ENCODE measurements at regions of chr11 and their contacts with region 1.

Region 1: DNA sequence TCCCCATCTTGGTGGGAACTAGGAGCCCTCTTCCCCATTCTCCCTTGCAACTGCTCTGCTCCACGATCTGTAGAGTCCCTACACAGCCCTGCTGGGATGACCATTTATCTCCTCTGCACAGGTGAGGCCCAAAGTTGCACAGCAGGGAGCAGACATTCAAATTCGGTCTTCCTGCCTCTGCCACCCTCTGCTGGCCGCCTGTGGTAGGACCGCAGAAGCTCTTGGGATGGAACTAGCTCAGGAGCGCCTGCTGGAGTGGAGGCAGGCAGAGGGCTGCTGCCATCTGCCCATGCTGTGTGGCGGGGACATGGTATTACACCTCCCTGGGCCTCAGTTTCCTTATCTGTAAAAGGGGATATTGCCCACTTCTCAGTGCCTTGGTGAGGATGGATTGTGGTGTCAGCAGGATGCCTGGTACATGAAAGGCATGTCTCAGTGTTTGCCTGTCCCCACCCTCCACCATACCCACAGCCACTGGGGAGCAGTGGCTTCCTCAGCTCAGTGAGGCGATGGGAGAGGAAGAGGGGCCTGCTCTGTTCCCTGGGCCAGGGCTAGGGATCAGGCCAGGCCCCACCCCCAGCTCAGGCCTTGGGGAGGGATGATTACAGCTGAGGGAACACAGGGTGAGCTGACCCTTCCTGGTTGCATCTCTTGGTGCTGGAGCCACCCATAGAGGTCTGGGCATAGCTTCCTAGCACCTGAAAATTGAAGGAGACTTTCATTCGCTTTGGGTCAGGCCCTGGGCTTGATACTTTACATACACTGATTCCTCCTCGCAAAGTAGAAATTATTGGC is 11.3 kb upstream of the OMP start:
- DNase-seq: peak; percentile 88
- ATAC-seq: peak; percentile 93
- H3K4me3 Mint-ChIP-seq: no peak overlapping the region
- H3K27ac Mint-ChIP-seq: no peak overlapping the region
- H3K4me1 Mint-ChIP-seq: peaks cover 7% of the 10 kb centered on the region
- H3K27me3 Mint-ChIP-seq: no peaks in the 10 kb centered on the region

Region 2: DNA sequence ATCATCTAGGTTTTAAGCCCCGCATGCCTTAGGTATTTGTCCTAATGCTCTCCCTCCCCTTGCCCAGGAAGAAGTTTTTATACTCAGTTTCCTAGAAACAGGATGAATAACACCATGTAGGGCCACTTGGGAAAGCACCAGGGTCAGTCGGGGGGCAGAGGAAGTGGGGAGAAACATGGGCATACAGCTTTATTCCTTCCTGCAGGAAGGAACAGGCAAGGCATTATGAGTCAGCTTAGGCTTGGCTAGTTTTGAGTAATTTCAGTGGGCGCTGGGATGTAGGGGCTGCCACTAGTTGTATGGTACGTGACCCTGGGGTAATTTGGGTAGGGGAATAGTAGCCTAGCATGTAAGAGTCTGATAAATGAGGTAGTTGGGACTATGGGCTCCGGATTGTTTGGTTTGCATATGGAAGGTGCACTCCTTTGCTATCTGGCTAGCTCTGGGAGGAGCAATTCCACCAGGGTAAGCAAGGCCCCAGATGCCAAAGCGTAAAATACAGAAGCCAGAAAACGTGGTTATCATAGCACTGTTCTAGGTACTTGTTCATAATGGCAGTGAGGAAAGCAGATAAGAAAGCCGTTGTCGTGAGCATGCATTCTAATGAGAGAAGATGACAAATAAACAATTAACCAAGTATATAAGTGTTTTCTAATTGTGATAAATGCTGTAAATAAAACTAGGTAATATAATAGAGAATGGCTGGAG is 205.8 kb before region 1 on chr11:
- CTCF ChIA-PET with region 1: no interaction called
- POLR2A ChIA-PET with region 1: no interaction called
- DNase-seq: no peak
- ATAC-seq: no peak
- H3K4me3 Mint-ChIP-seq: no peak overlapping the region
- H3K27ac Mint-ChIP-seq: no peak overlapping the region
- H3K4me1 Mint-ChIP-seq: peaks cover 9% of the 10 kb centered on the region
- H3K27me3 Mint-ChIP-seq: no peaks in the 10 kb centered on the region

Region 3: GRCh38 chr11:77039491-77040400 is 51.6 kb before region 1 on chr11:
- CTCF ChIA-PET with region 1: interaction called, 34 read pairs
- POLR2A ChIA-PET with region 1: interaction called, 3 read pairs
- DNase-seq: peak; percentile 44
- ATAC-seq: peak; percentile 80
- H3K4me3 Mint-ChIP-seq: no peak overlapping the region
- H3K27ac Mint-ChIP-seq: no peak overlapping the region
- H3K4me1 Mint-ChIP-seq: peaks cover 9% of the 10 kb centered on the region
- H3K27me3 Mint-ChIP-seq: peaks cover 44% of the 10 kb centered on the region

Region 4: GRCh38 chr11:77047007-77047927 is 44.1 kb before region 1 on chr11:
- CTCF ChIA-PET with region 1: interaction called, 77 read pairs
- POLR2A ChIA-PET with region 1: no interaction called
- DNase-seq: peak; percentile 91
- ATAC-seq: peak; percentile 89
- H3K4me3 Mint-ChIP-seq: peak overlapping the region; percentile 37
- H3K27ac Mint-ChIP-seq: peak overlapping the region; percentile 1
- H3K4me1 Mint-ChIP-seq: peaks cover 15% of the 10 kb centered on the region
- H3K27me3 Mint-ChIP-seq: peaks cover 21% of the 10 kb centered on the region

Region 5: GRCh38 chr11:77053217-77054015 is 37.9 kb before region 1 on chr11:
- CTCF ChIA-PET with region 1: interaction called, 77 read pairs
- POLR2A ChIA-PET with region 1: no interaction called
- DNase-seq: no peak
- ATAC-seq: no peak
- H3K4me3 Mint-ChIP-seq: no peak overlapping the region
- H3K27ac Mint-ChIP-seq: no peak overlapping the region
- H3K4me1 Mint-ChIP-seq: no peaks in the 10 kb centered on the region
- H3K27me3 Mint-ChIP-seq: peaks cover 3% of the 10 kb centered on the region

Region 6: DNA sequence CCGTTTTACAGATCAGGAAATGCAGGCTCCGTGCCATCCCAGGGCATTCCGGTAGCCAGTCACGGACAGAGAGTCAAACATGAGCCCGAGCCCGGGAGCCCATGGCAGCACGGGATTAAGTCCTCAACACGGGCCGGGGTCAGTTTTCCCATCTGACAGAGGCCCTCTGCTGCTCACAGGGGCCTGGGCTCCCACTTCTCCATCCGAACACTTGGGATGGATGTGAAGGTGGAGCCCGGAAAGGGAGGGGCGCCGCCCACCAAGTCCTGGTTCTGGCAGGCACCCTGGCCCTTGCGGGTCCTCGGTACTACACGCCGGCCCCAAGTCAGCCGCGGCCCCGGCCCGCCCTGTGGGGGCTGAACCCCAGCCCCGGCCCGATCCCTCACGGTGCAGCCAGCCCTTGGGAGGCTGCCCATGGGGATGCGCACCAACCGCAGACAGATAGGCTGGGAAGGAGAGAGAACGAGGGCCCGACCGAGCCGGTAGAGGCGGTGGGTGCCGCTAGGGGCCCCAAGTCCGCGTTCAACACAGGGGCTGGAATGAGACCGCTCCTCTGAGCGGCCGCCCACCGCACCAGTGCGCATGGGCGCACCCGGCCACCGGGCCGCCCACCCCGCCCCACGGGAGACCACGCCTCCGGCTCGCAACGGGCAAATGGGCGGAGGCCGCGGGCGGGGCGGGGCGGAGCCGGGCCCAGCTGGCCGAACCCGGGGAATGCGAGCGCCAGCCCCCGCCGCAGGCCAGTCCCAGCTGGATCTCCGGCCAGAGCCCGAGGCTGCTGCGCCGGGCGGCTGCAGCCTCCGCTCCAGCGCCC is 24.9 kb before region 1 on chr11 and contains the start of gene CAPN5:
- CTCF ChIA-PET with region 1: interaction called, 25 read pairs
- POLR2A ChIA-PET with region 1: no interaction called
- DNase-seq: peak; percentile 82
- ATAC-seq: peak; percentile 96
- H3K4me3 Mint-ChIP-seq: peak within 1 kb of the TSS; percentile 73
- H3K27ac Mint-ChIP-seq: no peak within 1 kb of the TSS
- H3K4me1 Mint-ChIP-seq: peaks cover 4% of the 10 kb centered on the region
- H3K27me3 Mint-ChIP-seq: peaks cover 33% of the 10 kb centered on the region
- total RNA-seq, gene CAPN5: 1.0 to 1.4 TPM

Region 7: GRCh38 chr11:77113382-77114088 is 22.2 kb after region 1 on chr11:
- CTCF ChIA-PET with region 1: interaction called, 29 read pairs
- POLR2A ChIA-PET with region 1: no interaction called
- DNase-seq: peak; percentile 54
- ATAC-seq: no peak
- H3K4me3 Mint-ChIP-seq: no peak overlapping the region
- H3K27ac Mint-ChIP-seq: no peak overlapping the region
- H3K4me1 Mint-ChIP-seq: peaks cover 4% of the 10 kb centered on the region
- H3K27me3 Mint-ChIP-seq: no peaks in the 10 kb centered on the region